ENCODE measurements at regions of chr2 and their contacts with region 1.

Region 1: GRCh38 chr2:151051574-151052220 is 210.0 kb downstream of the RBM43 start:
- DNase-seq: peak in 5 of 14 experiments; percentile 3 to 59 (median 31)
- ATAC-seq: peak; percentile 56
- H3K4me3 ChIP-seq: no peak overlapping the region
- H3K4me3 Mint-ChIP-seq: no peak overlapping the region
- H3K27ac ChIP-seq: no peak overlapping the region
- H3K27ac Mint-ChIP-seq: no peak overlapping the region
- H3K4me1 ChIP-seq: no peaks in the 10 kb centered on the region
- H3K4me1 Mint-ChIP-seq: no peaks in the 10 kb centered on the region
- H3K27me3 ChIP-seq: no peaks in the 10 kb centered on the region
- H3K27me3 Mint-ChIP-seq: no peaks in the 10 kb centered on the region
- CTCF ChIP-seq: peak; percentile 78

Region 2: DNA sequence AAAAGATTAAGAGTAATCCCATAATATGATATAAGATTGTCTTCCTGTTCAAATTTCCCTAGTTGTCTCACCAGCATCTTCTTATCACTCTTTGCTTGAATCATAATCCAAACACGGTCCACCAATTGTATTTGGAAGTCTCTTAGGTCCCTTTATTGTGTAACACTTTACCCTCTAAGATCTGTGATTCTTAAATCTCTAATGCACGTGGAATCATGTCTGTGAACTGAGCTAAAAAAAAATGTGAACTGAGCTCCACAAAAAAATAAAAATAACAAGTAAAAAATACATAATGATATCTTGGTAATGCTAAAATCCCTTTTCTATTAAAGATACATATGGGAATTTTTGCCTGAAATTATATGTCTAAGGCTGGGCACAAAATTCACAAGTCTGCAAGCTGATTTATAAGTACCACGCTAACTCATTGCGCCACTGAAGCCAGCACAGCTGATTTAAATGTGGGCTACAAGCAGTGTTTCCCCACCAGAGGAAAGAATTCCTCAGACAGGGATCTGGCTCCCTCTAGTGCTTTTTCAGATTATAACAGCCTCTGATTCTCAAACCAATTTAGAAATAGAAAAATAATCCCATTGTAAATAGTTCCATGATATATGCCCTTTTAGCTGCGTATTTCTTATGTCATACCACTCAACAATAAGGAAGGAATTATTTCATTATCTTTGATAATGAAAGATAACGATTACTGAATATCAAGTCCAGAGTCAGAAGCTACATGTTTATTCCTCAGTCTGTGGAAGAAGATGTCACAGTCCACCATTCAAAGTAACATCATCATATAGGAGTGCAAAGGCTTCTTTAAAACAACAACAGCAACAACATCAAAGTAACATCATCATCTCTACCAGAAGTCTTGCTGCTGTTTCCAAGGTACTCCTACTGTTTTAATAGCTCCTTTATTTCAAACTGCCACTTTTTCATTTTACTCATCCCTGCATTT is 187.1 kb after region 1 on chr2:
- CTCF ChIA-PET with region 1: no interaction called
- POLR2A ChIA-PET with region 1: no interaction called
- intact Hi-C with region 1: loop called in 1 of 2 experiments (anchors 10 kb)
- DNase-seq: peak in 8 of 14 experiments; percentile 2 to 71 (median 22)
- ATAC-seq: peak; percentile 63
- H3K4me3 ChIP-seq: no peak overlapping the region
- H3K4me3 Mint-ChIP-seq: no peak overlapping the region
- H3K27ac ChIP-seq: no peak overlapping the region
- H3K27ac Mint-ChIP-seq: no peak overlapping the region
- H3K4me1 ChIP-seq: no peaks in the 10 kb centered on the region
- H3K4me1 Mint-ChIP-seq: peaks cover 4% of the 10 kb centered on the region
- H3K27me3 ChIP-seq: no peaks in the 10 kb centered on the region
- H3K27me3 Mint-ChIP-seq: no peaks in the 10 kb centered on the region
- CTCF ChIP-seq: peak; percentile 97

Measured in CD4-positive, alpha-beta T cell (primary cell).